Activated CD8-positive, alpha-beta T cell treated with anti-CD3 and anti-CD28 coated beads, Interleukin-2, amount 10 ng/mL, durations not matched to agents 7 days and 5 days (primary cell): ENCODE measurements at regions of chr1 and their contacts with region 1.

Region 1: DNA sequence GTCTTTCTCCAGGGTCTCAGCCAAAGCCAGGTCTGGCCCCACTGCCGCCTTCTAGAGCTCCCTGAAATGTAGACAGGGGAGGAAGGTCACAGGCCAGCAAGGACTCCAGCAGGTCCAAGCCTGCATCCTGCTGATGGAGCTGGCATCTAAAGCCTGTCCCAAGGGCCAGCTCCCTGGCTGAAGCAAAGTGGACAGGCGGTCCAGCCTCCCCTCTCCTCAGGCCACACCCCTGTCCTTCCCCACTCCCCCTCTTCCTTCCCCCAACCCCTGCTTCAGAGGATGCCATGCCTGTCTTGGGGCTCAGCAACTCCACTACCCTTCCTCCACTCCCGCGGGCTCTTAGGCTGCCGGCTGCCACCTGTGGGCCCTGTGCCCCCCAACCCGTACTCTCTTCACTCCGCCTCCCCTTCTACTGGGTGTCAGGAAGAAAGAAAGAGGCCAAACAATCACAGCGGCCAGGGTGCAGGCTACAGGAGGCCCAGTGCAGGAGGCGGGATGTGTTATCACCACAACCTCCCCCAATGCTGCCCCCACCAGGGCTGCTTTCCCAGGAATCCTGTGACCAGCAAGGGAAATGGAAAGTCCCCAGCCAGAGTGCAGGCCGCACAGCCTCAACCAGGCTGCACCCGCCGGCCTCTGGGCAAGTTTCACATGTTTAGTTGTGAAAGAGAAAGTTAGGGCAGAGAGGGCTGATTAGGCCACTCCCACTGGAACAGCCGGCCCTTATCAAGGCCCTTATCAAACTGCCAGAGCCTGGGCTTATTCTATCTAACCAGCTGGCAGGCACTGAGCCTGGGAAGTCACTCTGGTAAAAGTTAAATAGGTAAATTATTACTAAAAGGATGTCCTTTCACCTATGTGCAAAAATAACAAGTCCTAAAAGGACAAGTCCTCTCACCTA is 34.1 kb downstream of the ACOT7 start:
- DNase-seq: peak; percentile 80
- ATAC-seq: peak; percentile 85
- H3K4me3 Mint-ChIP-seq: peak overlapping the region; percentile 74
- H3K27ac Mint-ChIP-seq: peak overlapping the region; percentile 91
- H3K4me1 Mint-ChIP-seq: peaks cover 58% of the 10 kb centered on the region
- H3K27me3 Mint-ChIP-seq: no peaks in the 10 kb centered on the region

Region 2: GRCh38 chr1:6393400-6394187 is 34.1 kb after region 1 on chr1 and contains the start of gene ACOT7:
- CTCF ChIA-PET with region 1: interaction called, 100 read pairs
- POLR2A ChIA-PET with region 1: interaction called, 40 read pairs
- DNase-seq: peak; percentile 93
- ATAC-seq: peak; percentile 87
- H3K4me3 Mint-ChIP-seq: peak within 1 kb of the TSS; percentile 82
- H3K27ac Mint-ChIP-seq: peak within 1 kb of the TSS; percentile 96
- H3K4me1 Mint-ChIP-seq: peaks cover 43% of the 10 kb centered on the region
- H3K27me3 Mint-ChIP-seq: peaks cover 3% of the 10 kb centered on the region
- total RNA-seq, gene ACOT7: 97.0 to 102 TPM

Region 3: GRCh38 chr1:6401673-6402072 is 42.2 kb after region 1 on chr1:
- CTCF ChIA-PET with region 1: interaction called, 100 read pairs
- POLR2A ChIA-PET with region 1: no interaction called
- DNase-seq: no peak
- ATAC-seq: no peak
- H3K4me3 Mint-ChIP-seq: no peak overlapping the region
- H3K27ac Mint-ChIP-seq: no peak overlapping the region
- H3K4me1 Mint-ChIP-seq: peaks cover 12% of the 10 kb centered on the region
- H3K27me3 Mint-ChIP-seq: peaks cover 5% of the 10 kb centered on the region